ENCODE measurements at regions of chr22 and their contacts with region 1.

Region 1: GRCh38 chr22:31451709-31452571 is 37.7 kb downstream of the EIF4ENIF1 start:
- DNase-seq: peak; percentile 31
- H3K4me3 ChIP-seq: no peak overlapping the region
- H3K27me3 ChIP-seq: no peaks in the 10 kb centered on the region
- CTCF ChIP-seq: peak; percentile 74

Region 2: GRCh38 chr22:31354515-31354914 is 97.4 kb before region 1 on chr22:
- CTCF ChIA-PET with region 1: no interaction called
- POLR2A ChIA-PET with region 1: no interaction called
- DNase-seq: no peak
- H3K4me3 ChIP-seq: no peak overlapping the region
- H3K27me3 ChIP-seq: no peaks in the 10 kb centered on the region; the same call in 1 of the 2 replicates
- CTCF ChIP-seq: no peak

Region 3: DNA sequence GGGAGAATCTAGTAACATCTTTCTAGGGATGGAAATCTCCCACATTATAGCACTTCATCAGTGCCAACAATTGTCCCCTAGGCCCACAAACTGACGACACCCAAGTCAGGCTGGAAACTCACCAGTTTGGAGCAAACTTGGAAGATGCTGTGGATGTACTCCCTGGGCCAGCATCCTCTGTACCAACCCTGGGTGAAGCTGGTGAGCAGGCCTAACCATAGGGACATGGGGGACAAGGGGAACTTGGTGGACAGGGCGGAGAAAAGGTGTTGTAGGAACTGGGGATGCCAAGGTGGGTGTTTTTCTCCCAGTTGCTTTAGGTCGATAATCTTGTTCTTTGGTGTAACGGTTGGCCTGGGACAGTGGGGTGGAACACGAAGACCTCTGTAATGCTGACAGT is 10.3 kb before region 1 on chr22:
- CTCF ChIA-PET with region 1: interaction called, 9 read pairs
- POLR2A ChIA-PET with region 1: interaction called, 13 read pairs
- DNase-seq: no peak
- H3K4me3 ChIP-seq: no peak overlapping the region
- H3K27me3 ChIP-seq: no peaks in the 10 kb centered on the region
- CTCF ChIP-seq: no peak

Region 4: DNA sequence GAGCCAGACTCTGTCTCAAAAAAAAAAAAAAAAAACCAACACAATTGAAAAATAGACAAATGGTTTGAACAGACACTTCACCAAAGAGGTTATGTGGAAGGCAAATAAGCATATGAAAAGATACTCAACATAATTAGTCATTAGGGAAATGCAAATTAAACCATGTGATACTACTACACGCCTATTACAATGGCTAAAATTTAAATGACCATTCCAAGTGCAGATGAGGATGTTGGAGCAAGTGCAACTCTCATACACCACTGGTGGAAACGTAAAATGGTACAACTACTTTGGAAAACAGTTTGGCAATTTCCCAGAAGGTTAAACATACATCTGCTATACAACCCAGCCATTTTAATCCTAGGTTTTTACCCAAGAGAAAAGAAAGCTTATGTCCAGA is 13.4 kb after region 1 on chr22:
- CTCF ChIA-PET with region 1: interaction called, 13 read pairs
- POLR2A ChIA-PET with region 1: no interaction called
- DNase-seq: no peak
- H3K4me3 ChIP-seq: no peak overlapping the region
- H3K27me3 ChIP-seq: no peaks in the 10 kb centered on the region
- CTCF ChIP-seq: no peak

Region 5: GRCh38 chr22:31680861-31681341 is 229.0 kb after region 1 on chr22:
- CTCF ChIA-PET with region 1: no interaction called
- POLR2A ChIA-PET with region 1: no interaction called
- DNase-seq: peak; percentile 56
- H3K4me3 ChIP-seq: no peak overlapping the region
- H3K27me3 ChIP-seq: no peaks in the 10 kb centered on the region
- CTCF ChIP-seq: no peak

Region 6: DNA sequence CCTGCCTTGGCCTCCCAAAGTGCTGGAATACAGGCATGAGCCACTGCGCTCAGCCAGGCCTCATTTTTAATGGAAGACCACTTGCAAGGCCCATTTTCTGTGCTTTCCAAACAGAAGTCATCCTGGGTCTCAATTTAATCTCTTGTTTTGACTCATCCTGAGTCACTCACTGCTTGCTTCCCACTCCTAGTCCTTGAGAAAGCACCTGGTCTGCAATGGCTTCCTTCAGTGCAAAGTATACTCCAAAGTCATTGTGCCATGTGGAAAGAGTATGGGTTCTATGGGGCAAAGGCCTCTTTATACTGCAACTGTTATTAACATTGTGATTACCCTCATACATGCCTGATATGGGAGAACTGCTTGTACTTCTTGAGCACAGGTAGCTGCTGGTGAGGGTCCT is 572.9 kb after region 1 on chr22:
- CTCF ChIA-PET with region 1: no interaction called
- POLR2A ChIA-PET with region 1: no interaction called
- DNase-seq: no peak
- H3K4me3 ChIP-seq: no peak overlapping the region
- H3K27me3 ChIP-seq: peaks cover 4% of the 10 kb centered on the region; the same call in 1 of the 2 replicates
- CTCF ChIP-seq: no peak

Measured in BJ (cell line).